ENCODE measurements at regions of chr2 and their contacts with region 1.

Region 1: GRCh38 chr2:222797261-222797660 is 63.6 kb upstream of the ACSL3 start:
- DNase-seq: no peak
- H3K4me3 Mint-ChIP-seq: no peak overlapping the region
- H3K27ac Mint-ChIP-seq: no peak overlapping the region
- H3K4me1 Mint-ChIP-seq: peaks cover 2% of the 10 kb centered on the region
- H3K27me3 Mint-ChIP-seq: peaks cover 13% of the 10 kb centered on the region

Region 2: DNA sequence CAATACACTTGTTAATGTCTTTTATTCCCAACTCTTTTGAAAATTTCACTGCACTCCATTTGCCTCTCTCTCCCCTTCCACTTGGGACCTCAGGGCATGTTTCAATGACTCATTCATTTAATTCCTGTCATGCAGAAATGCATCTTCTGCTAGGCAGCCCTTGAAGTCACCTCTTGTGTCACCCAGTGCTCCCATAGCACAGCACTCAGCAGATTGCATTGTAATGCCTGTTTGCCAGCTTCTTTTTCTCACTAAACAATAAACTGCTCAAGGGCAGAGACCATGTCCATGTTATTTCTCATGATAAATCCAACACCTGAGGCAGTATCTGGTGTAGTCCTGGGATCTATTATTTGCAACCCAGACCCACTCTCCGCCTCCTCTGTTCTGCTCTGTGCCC is 22.3 kb before region 1 on chr2:
- CTCF ChIA-PET with region 1: no interaction called
- POLR2A ChIA-PET with region 1: no interaction called
- DNase-seq: no peak
- H3K4me3 Mint-ChIP-seq: no peak overlapping the region
- H3K27ac Mint-ChIP-seq: no peak overlapping the region
- H3K4me1 Mint-ChIP-seq: no peaks in the 10 kb centered on the region
- H3K27me3 Mint-ChIP-seq: peaks cover 21% of the 10 kb centered on the region

Region 3: DNA sequence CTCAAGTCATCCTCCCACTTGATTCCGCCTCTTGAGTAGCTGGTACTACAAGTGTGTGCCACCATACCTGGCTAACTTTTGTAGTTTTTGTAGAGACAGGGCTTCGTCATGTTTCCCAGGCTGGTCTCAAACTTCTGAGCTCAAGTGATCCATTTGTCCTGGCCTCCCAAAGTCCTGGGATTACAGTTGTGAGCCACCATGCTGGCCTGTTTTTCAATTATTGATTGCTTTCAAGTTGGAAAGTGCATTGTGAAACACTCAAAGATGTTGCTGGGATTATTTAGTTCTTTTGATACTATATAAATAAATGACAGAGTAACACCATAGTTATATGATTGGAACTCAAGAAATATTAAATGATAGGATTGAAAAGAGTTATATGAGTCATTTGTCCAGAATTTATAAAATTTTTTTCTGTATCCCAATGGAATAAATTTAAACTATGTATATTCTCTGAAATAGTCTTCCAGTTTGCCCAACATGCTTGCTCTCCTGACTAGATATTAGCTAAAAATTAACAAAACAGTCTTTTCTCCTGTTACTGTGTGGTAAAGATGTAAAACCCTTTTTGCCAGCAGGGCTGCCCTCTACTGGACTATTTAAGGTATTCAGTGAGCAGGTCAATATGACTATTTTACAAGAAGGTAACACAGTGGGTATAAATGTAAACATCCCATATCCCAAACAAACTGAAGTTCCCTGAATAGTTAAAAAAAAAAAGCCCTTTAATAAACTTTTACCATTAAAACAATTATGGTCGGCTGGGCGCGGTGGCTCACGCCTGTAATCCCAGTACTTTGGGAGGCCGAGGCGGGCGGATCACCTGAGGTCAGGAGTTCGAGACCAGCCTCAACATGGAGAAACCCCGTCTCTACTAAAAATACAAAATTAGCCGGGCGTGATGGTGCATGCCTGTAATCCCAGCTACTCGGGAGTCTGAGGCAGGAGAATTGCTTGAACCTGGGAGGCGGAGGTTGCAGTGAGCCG is 106.3 kb after region 1 on chr2:
- CTCF ChIA-PET with region 1: interaction called, 13 read pairs
- POLR2A ChIA-PET with region 1: no interaction called
- DNase-seq: peak; percentile 28
- H3K4me3 Mint-ChIP-seq: no peak overlapping the region
- H3K27ac Mint-ChIP-seq: no peak overlapping the region
- H3K4me1 Mint-ChIP-seq: peaks cover 6% of the 10 kb centered on the region
- H3K27me3 Mint-ChIP-seq: no peaks in the 10 kb centered on the region